ENCODE measurements at regions of chr20 and their contacts with region 1.

Region 1: GRCh38 chr20:38926142-38926933 is at the start of gene FAM83D:
- DNase-seq: peak; percentile 90 to 95
- H3K4me3 ChIP-seq: peak within 1 kb of the TSS; percentile 58 to 73
- H3K27ac ChIP-seq: peak within 1 kb of the TSS; percentile 14 to 42
- H3K4me1 ChIP-seq: peaks cover 0 to 18% (median 14%) of the 10 kb centered on the region in 4 donors
- H3K27me3 ChIP-seq: peaks cover 0 to 3% of the 10 kb centered on the region in 2 donors
- CTCF ChIP-seq: peak in 1 of 2 experiments; percentile 73

Region 2: DNA sequence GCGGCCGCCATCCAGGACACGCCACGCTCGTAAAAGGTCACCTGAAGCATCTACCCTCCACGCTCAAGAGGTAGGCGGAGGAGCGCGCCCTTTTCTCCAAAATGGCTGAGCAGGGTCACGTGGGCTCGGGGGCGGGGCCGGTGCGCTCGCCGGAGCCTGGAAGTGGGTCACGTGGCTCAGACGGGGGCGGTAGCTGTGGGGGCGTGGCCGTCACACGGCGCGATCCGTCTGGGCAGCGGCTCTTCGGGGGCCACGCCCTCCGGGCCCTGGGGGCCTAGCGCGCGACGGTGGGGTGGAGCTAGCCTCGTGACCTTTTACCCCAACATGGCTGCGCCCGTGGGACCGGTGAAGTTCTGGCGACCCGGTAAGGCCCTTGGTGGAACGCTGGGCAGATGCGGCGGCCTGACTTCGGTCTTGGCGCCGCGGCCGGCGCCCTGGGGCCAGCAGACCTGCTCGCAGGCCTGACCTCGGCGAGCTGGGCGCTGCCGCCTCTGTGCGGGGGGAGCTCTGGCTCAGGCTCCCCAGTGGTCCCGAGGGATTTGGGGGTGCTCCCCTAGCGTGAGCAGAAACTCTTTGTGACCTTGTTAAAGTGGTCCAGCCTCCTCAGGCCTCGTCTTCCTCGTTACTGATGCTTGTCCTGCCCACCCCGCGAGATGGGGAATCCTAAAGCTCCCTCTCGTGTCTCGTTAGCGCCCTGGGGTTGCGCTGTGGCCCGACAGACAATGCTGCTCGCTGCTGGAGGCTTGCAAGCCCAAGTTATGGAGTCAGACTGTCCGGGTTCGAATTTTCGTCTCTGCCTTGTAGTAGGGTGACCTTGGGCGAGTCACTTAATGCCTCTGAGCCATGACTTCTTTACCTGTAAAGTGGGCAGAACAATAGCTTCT is 35.9 kb after region 1 on chr20 and contains the start of gene DHX35:
- intact Hi-C with region 1: loop called (anchors 5 kb)
- DNase-seq: peak; percentile 96 to 99
- H3K4me3 ChIP-seq: peak within 1 kb of the TSS; percentile 76 to 91
- H3K27ac ChIP-seq: peak within 1 kb of the TSS; percentile 79 to 91
- H3K4me1 ChIP-seq: peaks cover 0 to 16% (median 9%) of the 10 kb centered on the region in 4 donors
- H3K27me3 ChIP-seq: no peaks in the 10 kb centered on the region
- CTCF ChIP-seq: peak; percentile 5 to 27

Region 3: GRCh38 chr20:39049684-39050554 is 123.6 kb after region 1 on chr20:
- intact Hi-C with region 1: loop called (anchors 2 kb)
- DNase-seq: peak; percentile 49 to 84
- H3K4me3 ChIP-seq: peak overlapping the region; percentile 59 to 74
- H3K27ac ChIP-seq: peak overlapping the region; percentile 70 to 71
- H3K4me1 ChIP-seq: peaks cover 0 to 7% (median 2%) of the 10 kb centered on the region in 4 donors
- H3K27me3 ChIP-seq: peaks cover 0 to 9% of the 10 kb centered on the region in 2 donors
- CTCF ChIP-seq: peak; percentile 96 to 97

Measured in tibial artery (tissue), 4 donors.